Adrenal gland (tissue), 19 donors: ENCODE measurements at regions of chr7 and their contacts with region 1.

Region 1: DNA sequence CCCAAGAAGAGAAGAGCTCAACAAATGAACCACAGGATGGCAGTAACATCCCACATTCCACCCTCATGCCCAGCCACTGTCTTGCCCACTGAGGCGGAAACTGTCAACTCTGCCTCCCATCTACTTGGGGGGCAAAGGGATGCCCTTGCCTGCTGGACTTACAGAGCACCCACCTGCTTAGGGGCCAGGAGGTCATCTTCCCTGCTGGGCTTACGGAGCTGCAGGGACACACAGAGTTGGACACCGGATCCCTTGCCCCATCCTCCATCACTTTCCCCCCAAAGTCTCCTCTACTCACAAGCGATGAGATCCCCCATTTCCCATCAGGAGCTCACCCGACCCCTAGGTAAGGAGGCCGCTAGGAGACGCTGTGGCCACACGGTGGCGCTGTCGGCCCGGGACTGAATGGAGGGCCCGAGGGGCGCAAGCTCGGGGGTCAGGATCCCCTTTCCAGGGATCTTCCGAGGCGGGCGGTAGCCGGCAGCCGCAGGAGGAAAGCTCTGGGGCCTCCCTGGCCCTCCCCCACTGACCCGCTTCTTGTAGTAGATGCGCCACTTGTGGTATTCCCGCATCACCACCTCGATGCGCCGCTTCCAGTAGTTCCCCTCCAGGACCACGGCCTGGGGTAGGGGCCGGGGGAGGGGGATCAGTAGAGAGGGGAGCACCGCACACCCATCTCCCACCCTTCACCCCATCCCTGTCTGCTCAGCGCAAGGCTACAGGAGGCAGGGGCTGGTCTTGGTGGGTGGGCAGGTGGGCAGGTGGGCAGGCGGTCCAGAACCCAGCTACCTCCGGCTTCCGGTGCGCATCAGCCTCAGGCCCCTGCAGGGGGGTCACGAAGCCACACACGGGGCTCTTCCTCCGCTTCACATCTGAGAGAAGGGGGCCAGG is 17.3 kb downstream of the MLXIPL start:
- DNase-seq: peak in 3 of 7 donors; percentile 50 to 65 (median 62)
- H3K4me3 ChIP-seq: no peak overlapping the region
- H3K27ac ChIP-seq: no peak overlapping the region
- H3K4me1 ChIP-seq: peaks cover 0 to 6% of the 10 kb centered on the region in 2 donors
- H3K27me3 ChIP-seq: no peaks in the 10 kb centered on the region
- CTCF ChIP-seq: peak; percentile 76 to 97 (median 90)
- POLR2A ChIP-seq: no peak

Region 2: DNA sequence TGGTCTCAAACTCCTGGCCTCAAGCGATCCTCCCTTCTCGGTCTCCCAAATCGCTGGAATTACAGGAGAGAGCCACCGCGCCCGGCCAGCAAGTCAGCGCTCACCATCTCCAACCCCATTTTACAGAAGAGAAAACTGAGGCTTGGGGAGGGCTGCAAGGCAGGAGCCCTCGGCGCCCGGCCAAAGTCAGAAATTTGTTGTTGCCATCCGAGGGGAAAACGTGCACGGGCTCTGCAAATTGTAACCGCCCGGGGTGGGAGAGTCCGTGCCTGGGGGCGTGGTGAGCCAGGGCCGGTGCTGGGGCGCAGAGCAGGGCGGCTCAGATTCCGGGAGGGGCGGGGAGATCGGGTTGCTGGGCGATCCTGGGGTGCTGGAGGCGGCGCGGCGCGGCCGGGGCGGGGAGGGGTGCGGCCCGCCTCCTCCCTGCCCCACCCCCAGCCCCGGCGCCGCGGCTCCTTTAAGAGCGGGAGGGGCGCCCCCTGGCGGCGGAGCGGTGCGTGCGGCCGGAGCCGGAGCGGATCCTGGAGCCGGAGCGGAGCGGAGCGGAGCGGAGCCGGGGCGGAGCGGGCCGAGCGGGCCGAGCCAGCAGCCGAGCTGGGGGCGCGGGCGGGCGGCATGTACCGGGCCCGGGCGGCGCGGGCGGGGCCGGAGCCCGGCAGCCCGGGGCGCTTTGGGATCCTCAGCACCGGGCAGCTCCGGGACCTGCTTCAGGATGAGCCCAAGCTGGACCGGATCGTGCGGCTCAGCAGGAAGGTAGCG is 60.5 kb after region 1 on chr7 and contains the start of gene VPS37D:
- intact Hi-C with region 1: loop called (anchors 5 kb)
- DNase-seq: peak; percentile 84 to 94 (median 92)
- H3K4me3 ChIP-seq: peak within 1 kb of the TSS in 1 of 4 donors; percentile 71
- H3K27ac ChIP-seq: peak within 1 kb of the TSS in 1 of 5 donors; percentile 22
- H3K4me1 ChIP-seq: no peaks in the 10 kb centered on the region
- H3K27me3 ChIP-seq: no peaks in the 10 kb centered on the region
- CTCF ChIP-seq: peak in 5 of 6 experiments; percentile 13 to 99 (median 79)
- POLR2A ChIP-seq: peak in 1 of 2 donors; percentile 73
- total RNA-seq, gene VPS37D: 0.54 to 7.0 (median 2.0) TPM

Region 3: GRCh38 chr7:73683056-73683964 is 76.3 kb after region 1 on chr7 and contains the starts of genes BUD23 and DNAJC30:
- intact Hi-C with region 1: no loop called
- DNase-seq: peak; percentile 98 to 99 (median 99)
- H3K4me3 ChIP-seq: peak within 1 kb of the TSS; percentile 40 to 94 (median 86)
- H3K27ac ChIP-seq: peak within 1 kb of the TSS in 4 of 5 donors; percentile 57 to 94 (median 86)
- H3K4me1 ChIP-seq: peaks cover 20 to 31% of the 10 kb centered on the region in 2 donors
- H3K27me3 ChIP-seq: no peaks in the 10 kb centered on the region
- CTCF ChIP-seq: peak in 3 of 6 experiments; percentile 14 to 34 (median 15)
- POLR2A ChIP-seq: peak; percentile 25 to 70
- total RNA-seq, gene BUD23: 34.7 to 69.4 (median 60.2) TPM
- total RNA-seq, gene DNAJC30: 7.1 to 28.2 (median 16.1) TPM

Region 4: GRCh38 chr7:73726083-73726466 is 119.0 kb after region 1 on chr7:
- intact Hi-C with region 1: loop called (anchors 2 to 5 kb)
- DNase-seq: no peak
- H3K4me3 ChIP-seq: no peak overlapping the region
- H3K27ac ChIP-seq: no peak overlapping the region
- H3K4me1 ChIP-seq: no peaks in the 10 kb centered on the region
- H3K27me3 ChIP-seq: peaks cover 4% of the 10 kb centered on the region
- CTCF ChIP-seq: no peak
- POLR2A ChIP-seq: no peak

Region 5: DNA sequence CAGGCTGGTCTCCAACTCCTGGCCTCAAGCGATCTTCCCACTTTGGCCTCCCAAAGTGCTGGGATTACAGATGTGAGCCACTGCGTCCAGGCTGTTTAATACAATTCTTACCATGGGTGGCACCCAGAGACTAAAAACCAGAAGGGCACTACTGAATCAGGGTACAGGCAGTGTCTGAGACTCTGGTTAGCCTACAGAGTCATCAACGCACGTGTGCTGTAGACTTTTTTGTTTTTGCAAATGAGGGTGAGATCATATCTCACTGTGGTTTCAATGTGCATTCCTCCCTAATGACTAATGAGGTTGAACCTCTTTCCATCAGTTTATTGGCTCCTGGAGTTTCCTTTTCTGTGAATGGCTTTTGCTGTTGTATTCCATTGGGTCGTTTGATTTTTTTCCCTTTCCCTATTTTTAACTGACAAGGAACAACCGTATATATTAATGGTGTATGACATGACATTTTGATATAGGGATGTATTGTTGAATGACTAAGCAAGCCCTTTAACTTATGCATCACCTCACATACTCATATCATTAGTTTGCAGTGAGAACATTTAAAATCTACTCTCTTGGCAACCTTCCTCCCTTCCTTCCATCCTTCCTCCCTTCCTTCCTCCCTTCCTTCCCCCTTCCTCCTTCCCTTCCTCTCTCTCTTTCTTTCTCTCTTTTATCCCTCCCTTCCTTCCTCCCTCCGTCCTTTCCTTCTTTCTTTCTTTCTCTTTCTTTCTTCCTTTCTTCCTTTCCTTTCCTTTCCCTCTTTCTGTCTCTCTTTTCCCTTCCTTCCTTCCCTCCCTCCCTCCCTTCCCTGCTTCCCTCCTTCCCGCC is 244.6 kb after region 1 on chr7:
- intact Hi-C with region 1: loop called in 1 of 2 experiments (anchors 10 kb)
- DNase-seq: peak in 2 of 7 donors; percentile 25 to 48
- H3K4me3 ChIP-seq: no peak overlapping the region
- H3K27ac ChIP-seq: peak overlapping the region in 1 of 5 donors; percentile 59
- H3K4me1 ChIP-seq: peaks cover 0 to 6% of the 10 kb centered on the region in 2 donors
- H3K27me3 ChIP-seq: no peaks in the 10 kb centered on the region
- CTCF ChIP-seq: no peak
- POLR2A ChIP-seq: no peak